Heart left ventricle (tissue), 16 donors: ENCODE measurements at regions of chr3 and their contacts with region 1.

Region 1: DNA sequence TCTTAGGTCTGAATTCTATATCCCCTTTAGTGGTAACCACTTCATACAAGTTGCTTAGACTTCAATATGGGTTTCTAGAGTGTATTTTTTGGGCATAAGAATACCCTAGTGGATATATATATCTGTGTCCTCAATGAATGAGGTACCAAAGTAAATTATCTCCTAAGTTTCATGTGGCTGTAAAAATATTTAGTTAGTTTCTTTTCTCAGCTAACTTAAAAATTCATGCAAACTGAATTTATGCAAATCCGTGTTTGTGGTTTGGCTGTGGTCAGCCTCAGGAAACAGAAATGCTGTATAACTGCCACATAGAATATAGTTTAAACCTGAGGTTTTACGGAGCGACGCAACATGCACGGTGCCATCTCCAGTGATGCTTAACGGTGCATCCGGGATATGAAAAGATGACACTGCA is 80.3 kb downstream of the PEX5L start:
- DNase-seq: no peak
- ATAC-seq: no peak
- H3K4me3 ChIP-seq: no peak overlapping the region
- H3K27ac ChIP-seq: no peak overlapping the region
- H3K4me1 ChIP-seq: no peaks in the 10 kb centered on the region
- H3K27me3 ChIP-seq: peaks cover 0 to 6% (median 0%) of the 10 kb centered on the region in 9 donors
- CTCF ChIP-seq: no peak
- POLR2A ChIP-seq: no peak

Region 2: DNA sequence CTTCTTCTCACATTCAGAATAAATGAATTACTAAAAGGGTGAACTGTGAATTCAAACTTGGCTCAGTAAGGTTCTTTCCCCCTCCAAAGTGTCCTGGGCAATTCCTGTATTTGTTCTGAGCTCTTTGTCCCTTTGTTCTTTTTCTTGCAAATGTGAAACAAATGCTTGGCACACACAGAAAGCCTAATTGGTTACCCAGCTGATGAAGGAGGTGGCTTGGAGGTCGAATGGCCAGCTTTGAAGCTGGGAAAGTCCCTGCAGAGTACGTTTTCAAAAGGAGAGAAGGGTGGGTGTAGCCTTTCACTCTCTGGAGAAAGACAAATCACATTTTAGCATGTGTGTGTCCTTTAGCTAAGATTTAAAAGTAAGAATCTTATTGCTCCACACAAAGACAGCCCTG is 74.1 kb before region 1 on chr3:
- intact Hi-C with region 1: no loop called
- DNase-seq: no peak
- ATAC-seq: peak in 2 of 4 donors; percentile 22 to 50
- H3K4me3 ChIP-seq: no peak overlapping the region
- H3K27ac ChIP-seq: no peak overlapping the region
- H3K4me1 ChIP-seq: peaks cover 0 to 7% (median 0%) of the 10 kb centered on the region in 12 donors
- H3K27me3 ChIP-seq: peaks cover 0 to 2% (median 0%) of the 10 kb centered on the region in 9 donors
- CTCF ChIP-seq: no peak
- POLR2A ChIP-seq: no peak

Region 3: GRCh38 chr3:179991883-179992282 is 35.5 kb after region 1 on chr3:
- intact Hi-C with region 1: loop called in 1 of 10 experiments (anchors 2 kb)
- DNase-seq: no peak
- ATAC-seq: no peak
- H3K4me3 ChIP-seq: no peak overlapping the region
- H3K27ac ChIP-seq: no peak overlapping the region
- H3K4me1 ChIP-seq: no peaks in the 10 kb centered on the region
- H3K27me3 ChIP-seq: no peaks in the 10 kb centered on the region
- CTCF ChIP-seq: no peak
- POLR2A ChIP-seq: no peak

Region 4: GRCh38 chr3:180063810-180064209 is 107.4 kb after region 1 on chr3:
- intact Hi-C with region 1: no loop called
- DNase-seq: no peak
- ATAC-seq: no peak
- H3K4me3 ChIP-seq: no peak overlapping the region
- H3K27ac ChIP-seq: no peak overlapping the region
- H3K4me1 ChIP-seq: no peaks in the 10 kb centered on the region
- H3K27me3 ChIP-seq: peaks cover 0 to 10% (median 0%) of the 10 kb centered on the region in 9 donors
- CTCF ChIP-seq: no peak
- POLR2A ChIP-seq: no peak